ENCODE measurements at regions of chr2 and their contacts with region 1.

Region 1: GRCh38 chr2:147242445-147242844 is 602.4 kb upstream of the ACVR2A start:
- DNase-seq: no peak
- ATAC-seq: no peak
- H3K4me3 ChIP-seq: no peak overlapping the region
- H3K27ac ChIP-seq: no peak overlapping the region
- H3K4me1 ChIP-seq: no peaks in the 10 kb centered on the region
- H3K27me3 ChIP-seq: no peaks in the 10 kb centered on the region
- CTCF ChIP-seq: no peak

Region 2: DNA sequence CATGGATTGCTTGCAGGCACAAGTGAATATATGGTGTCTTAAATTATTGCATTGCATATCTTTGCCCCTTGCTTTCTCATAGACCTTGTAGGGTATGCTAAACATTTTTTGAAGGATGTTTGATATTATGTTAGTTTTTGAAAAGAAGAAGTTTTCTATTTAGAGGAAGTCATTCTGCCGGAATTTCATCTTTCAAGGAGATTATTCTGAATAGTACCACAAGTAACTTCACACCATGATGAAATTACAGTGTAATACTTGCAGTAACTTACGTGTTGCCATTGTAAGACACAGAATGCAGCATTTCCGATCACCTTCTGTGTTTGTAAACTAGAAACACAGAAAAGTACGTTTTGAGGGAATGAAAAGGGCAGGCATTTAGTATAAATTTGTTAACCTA is 674.3 kb after region 1 on chr2:
- intact Hi-C with region 1: loop called (anchors 5 kb)
- DNase-seq: no peak
- ATAC-seq: no peak
- H3K4me3 ChIP-seq: no peak overlapping the region
- H3K27ac ChIP-seq: no peak overlapping the region
- H3K4me1 ChIP-seq: peaks cover 12% of the 10 kb centered on the region
- H3K27me3 ChIP-seq: no peaks in the 10 kb centered on the region
- CTCF ChIP-seq: no peak

Measured in lower lobe of right lung (tissue), 2 donors.